ENCODE measurements at regions of chr6 and their contacts with region 1.

Region 1: GRCh38 chr6:123323452-123324329 is 313.1 kb downstream of the TRDN start:
- DNase-seq: no peak
- H3K4me3 ChIP-seq: no peak overlapping the region
- H3K27ac ChIP-seq: no peak overlapping the region
- H3K27me3 ChIP-seq: no peaks in the 10 kb centered on the region
- CTCF ChIP-seq: no peak

Region 2: GRCh38 chr6:122869437-122870024 is 454.2 kb before region 1 on chr6:
- intact Hi-C with region 1: loop called in 1 of 2 experiments (anchors 10 kb)
- DNase-seq: peak in 7 of 10 donors; percentile 40 to 69 (median 45)
- H3K4me3 ChIP-seq: no peak overlapping the region
- H3K27ac ChIP-seq: no peak overlapping the region
- H3K27me3 ChIP-seq: peaks cover 0 to 2% (median 0%) of the 10 kb centered on the region in 45 donors
- CTCF ChIP-seq: peak in 54 of 56 donors; percentile 31 to 77 (median 57)